ENCODE measurements at regions of chr19 and their contacts with region 1.

Region 1: DNA sequence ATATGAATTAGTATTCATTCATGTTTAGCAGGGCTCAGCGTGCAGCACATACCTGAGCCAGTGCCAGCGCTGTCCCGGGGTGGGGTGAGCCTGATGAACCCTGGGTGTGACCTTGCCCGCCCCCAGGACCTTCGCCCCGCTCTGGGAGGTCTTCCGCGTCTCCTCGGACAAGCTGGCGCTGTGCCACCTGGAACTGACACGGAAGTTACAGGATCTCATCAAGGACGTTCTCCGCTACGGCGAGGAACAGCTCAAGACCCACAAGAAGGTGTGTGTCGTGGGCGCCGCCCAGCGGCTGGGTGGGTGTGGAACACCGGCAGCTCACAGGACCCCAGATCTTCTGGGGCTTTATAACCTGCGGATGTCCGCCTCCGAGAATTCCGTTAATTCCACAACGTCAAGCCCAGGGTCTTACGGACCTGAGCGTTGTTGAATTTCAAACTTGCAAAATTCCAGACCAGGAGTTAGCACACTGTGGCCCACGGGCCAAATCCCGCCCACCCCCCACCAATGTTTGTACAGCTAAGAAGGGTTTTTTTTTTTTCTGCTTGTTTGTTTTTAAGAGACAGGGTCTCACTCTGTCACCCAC is 15.4 kb downstream of the FCHO1 start:
- DNase-seq: peak; percentile 73
- H3K4me3 ChIP-seq: no peak overlapping the region
- H3K27ac ChIP-seq: no peak overlapping the region
- H3K4me1 ChIP-seq: peaks cover 3% of the 10 kb centered on the region
- H3K27me3 ChIP-seq: no peaks in the 10 kb centered on the region
- CTCF ChIP-seq: peak; percentile 96 to 97
- POLR2A ChIP-seq: no peak

Region 2: DNA sequence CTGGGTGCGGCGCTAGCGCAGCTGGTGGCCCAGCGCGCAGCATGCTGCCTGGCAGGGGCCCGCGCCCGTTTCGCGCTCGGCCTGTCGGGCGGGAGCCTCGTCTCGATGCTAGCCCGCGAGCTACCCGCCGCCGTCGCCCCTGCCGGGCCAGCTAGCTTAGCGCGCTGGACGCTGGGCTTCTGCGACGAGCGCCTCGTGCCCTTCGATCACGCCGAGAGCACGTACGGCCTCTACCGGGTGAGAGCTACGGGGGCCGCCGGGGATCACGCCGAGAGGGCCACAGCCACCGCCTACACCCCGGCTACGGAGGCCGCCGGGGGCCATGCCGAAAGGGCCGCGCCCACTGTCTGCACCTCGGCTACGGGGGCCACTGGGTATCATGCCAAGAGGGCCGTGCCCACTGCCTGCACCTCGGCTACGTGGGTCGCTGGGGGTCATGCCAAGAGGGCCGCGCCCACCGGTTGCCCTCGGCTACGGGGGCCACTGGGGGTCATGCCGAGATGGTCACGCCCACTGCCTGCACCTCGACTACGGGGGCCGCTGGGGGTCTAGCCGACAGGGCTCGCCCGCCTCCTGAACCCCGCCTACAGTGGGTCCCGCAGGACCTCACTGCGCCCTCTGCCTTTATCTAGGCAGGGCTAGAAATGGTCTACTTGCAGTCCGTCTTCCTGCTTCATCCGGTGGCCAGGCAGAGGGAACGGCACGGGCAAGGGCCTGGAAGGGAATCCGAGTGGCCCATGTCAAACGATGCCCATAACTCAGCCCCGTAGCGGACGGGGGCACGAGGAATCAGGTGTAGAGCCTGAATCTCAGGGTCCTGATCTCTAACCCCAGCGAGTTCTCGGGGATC is 254.7 kb before region 1 on chr19:
- CTCF ChIA-PET with region 1: interaction called, 13 read pairs
- POLR2A ChIA-PET with region 1: no interaction called
- dilution Hi-C with region 1: no loop called
- intact Hi-C with region 1: no loop called
- DNase-seq: peak; percentile 84
- H3K4me3 ChIP-seq: peak overlapping the region; percentile 81 to 82 (median 81)
- H3K27ac ChIP-seq: peak overlapping the region; percentile 69
- H3K4me1 ChIP-seq: peaks cover 13% of the 10 kb centered on the region
- H3K27me3 ChIP-seq: no peaks in the 10 kb centered on the region
- CTCF ChIP-seq: peak in 1 of 2 donors; percentile 14
- POLR2A ChIP-seq: no peak

Region 3: GRCh38 chr19:17605761-17606745 is 160.6 kb before region 1 on chr19:
- CTCF ChIA-PET with region 1: interaction called, 16 read pairs
- POLR2A ChIA-PET with region 1: interaction called, 4 read pairs
- dilution Hi-C with region 1: no loop called
- intact Hi-C with region 1: loop called (anchors 2 kb)
- DNase-seq: peak; percentile 77
- H3K4me3 ChIP-seq: peak overlapping the region in 1 of 3 experiments; percentile 0
- H3K27ac ChIP-seq: no peak overlapping the region
- H3K4me1 ChIP-seq: no peaks in the 10 kb centered on the region
- H3K27me3 ChIP-seq: peaks cover 2 to 3% of the 10 kb centered on the region in 2 experiments
- CTCF ChIP-seq: peak; percentile 70
- POLR2A ChIP-seq: no peak

Region 4: DNA sequence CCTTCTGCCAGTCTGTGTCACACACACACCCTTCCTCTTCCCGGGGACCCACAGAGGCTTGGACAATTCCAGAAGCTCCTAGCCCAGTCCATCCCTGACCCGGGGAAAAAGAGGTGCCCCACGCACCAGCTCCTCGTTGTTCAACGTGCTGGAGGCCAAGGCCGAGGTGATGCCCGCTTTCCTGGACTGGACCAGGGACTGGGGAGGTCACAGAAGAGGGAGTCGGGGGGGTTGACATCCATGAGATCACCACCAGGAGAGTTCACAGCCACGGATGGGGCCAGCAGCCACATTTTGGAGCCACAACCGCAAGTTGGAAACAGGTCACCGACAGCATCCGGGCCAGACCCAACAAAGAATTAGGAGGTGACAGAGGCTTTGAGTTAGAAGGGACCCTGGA is 117.9 kb before region 1 on chr19:
- CTCF ChIA-PET with region 1: no interaction called
- POLR2A ChIA-PET with region 1: no interaction called
- dilution Hi-C with region 1: no loop called
- intact Hi-C with region 1: no loop called
- DNase-seq: no peak
- H3K4me3 ChIP-seq: no peak overlapping the region
- H3K27ac ChIP-seq: no peak overlapping the region
- H3K4me1 ChIP-seq: no peaks in the 10 kb centered on the region
- H3K27me3 ChIP-seq: no peaks in the 10 kb centered on the region
- CTCF ChIP-seq: no peak
- POLR2A ChIP-seq: no peak

Region 5: DNA sequence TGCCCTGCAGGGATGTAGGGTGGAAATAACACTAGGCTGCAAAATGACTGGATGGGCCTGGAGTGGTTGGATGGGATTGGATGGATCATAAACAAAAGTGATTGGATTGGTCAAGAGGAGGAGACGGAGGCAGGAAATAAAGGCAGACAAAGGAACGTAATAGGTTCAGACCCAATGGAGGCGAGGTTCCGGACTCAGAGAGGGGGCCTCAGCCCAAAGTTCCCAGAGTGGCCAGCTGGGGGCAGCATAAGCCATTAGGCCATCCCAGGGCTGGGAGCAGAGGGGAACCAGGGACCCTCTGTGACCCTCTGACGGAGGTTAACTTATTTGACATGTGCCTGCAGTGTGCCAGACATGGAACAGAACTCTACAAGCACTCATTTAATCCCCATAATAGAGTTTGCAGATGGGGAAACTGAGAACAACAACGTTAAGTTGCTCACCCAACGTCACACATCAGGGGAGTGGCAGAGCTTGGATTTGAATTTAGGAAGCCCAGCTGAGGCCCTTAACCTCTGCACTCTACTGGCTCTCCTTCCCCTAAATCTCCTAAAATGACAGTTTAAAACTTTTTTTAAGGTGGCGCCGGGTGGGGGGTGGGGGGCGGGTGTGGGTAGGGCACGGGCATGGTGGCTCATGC is 62.7 kb before region 1 on chr19:
- CTCF ChIA-PET with region 1: interaction called, 182 read pairs
- POLR2A ChIA-PET with region 1: interaction called, 7 read pairs
- dilution Hi-C with region 1: no loop called
- intact Hi-C with region 1: loop called (anchors 1 kb)
- DNase-seq: peak; percentile 60
- H3K4me3 ChIP-seq: no peak overlapping the region
- H3K27ac ChIP-seq: no peak overlapping the region
- H3K4me1 ChIP-seq: no peaks in the 10 kb centered on the region
- H3K27me3 ChIP-seq: no peaks in the 10 kb centered on the region
- CTCF ChIP-seq: peak; percentile 85
- POLR2A ChIP-seq: no peak

Region 6: GRCh38 chr19:17741456-17741855 is 25.2 kb before region 1 on chr19:
- CTCF ChIA-PET with region 1: interaction called, 10 read pairs
- POLR2A ChIA-PET with region 1: interaction called, 5 read pairs
- dilution Hi-C with region 1: no loop called
- intact Hi-C with region 1: no loop called
- DNase-seq: no peak
- H3K4me3 ChIP-seq: no peak overlapping the region
- H3K27ac ChIP-seq: no peak overlapping the region
- H3K4me1 ChIP-seq: no peaks in the 10 kb centered on the region
- H3K27me3 ChIP-seq: no peaks in the 10 kb centered on the region
- CTCF ChIP-seq: no peak
- POLR2A ChIP-seq: no peak

Region 7: DNA sequence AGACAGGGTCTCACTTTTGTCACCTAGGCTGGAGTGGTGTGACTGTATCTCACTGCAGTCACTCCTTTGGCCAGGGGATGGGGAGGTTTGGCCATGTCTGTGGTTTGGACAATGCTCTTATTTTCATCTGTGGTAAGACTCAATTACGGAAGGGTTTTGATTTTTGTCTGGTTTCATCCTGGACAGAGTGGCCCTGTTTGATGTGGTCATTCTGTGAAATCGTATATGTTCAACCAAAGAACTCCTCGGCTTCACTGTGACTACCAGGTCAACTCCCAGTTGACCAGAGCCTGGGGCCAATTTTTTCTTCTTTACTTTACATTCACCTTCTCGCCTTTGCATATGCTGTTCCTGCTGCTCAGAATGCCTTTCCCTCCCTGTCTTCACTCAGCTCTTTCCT is 159.4 kb after region 1 on chr19:
- CTCF ChIA-PET with region 1: no interaction called
- POLR2A ChIA-PET with region 1: no interaction called
- dilution Hi-C with region 1: no loop called
- intact Hi-C with region 1: no loop called
- DNase-seq: no peak
- H3K4me3 ChIP-seq: no peak overlapping the region
- H3K27ac ChIP-seq: no peak overlapping the region
- H3K4me1 ChIP-seq: no peaks in the 10 kb centered on the region
- H3K27me3 ChIP-seq: peaks cover 0 to 2% of the 10 kb centered on the region in 2 experiments
- CTCF ChIP-seq: no peak
- POLR2A ChIP-seq: no peak

Measured in endothelial cell of umbilical vein (primary cell).